Heart left ventricle (tissue), 16 donors: ENCODE measurements at regions of chr2 and their contacts with region 1.

Region 1: DNA sequence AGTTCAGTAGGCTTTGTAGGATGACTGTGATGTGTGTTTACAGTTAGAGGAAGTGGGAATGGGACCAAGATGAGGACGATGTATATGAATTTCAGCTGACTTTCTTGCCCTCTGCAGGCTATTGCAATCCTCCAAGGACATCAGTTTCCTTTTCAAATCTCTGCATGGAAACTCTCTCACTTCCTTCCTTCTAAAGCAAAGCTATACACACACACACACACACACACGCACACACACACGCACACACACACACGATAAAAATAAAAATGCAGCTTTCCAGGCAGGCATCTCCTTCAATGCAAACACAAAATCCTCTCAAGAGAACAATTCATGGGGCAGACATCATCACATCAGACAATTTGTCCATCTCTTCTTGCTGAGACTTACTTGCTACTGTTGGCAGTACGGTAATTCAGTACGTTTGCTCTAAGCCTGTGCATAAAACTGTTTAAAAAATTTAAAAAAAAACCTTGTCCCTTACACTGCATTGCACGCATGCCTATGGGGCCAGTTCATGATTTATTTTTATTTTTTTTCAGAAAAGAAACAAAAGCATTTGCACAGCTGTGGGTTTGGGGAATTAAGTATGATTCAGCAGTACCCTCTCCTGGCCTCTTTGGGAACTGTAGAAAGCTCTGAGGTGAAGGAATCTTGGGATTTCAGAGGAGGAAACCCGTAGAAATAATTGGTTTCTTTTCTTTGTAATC is 27.1 kb upstream of the ICOS start:
- DNase-seq: peak in 1 of 5 donors; percentile 25
- ATAC-seq: peak; percentile 79 to 89 (median 87)
- H3K4me3 ChIP-seq: peak overlapping the region in 8 of 12 donors; percentile 14 to 54 (median 35)
- H3K27ac ChIP-seq: peak overlapping the region; percentile 0 to 85 (median 28)
- H3K4me1 ChIP-seq: peaks cover 0 to 30% (median 8%) of the 10 kb centered on the region in 12 donors
- H3K27me3 ChIP-seq: no peaks in the 10 kb centered on the region
- CTCF ChIP-seq: peak; percentile 56 to 91 (median 75)
- POLR2A ChIP-seq: no peak

Region 2: DNA sequence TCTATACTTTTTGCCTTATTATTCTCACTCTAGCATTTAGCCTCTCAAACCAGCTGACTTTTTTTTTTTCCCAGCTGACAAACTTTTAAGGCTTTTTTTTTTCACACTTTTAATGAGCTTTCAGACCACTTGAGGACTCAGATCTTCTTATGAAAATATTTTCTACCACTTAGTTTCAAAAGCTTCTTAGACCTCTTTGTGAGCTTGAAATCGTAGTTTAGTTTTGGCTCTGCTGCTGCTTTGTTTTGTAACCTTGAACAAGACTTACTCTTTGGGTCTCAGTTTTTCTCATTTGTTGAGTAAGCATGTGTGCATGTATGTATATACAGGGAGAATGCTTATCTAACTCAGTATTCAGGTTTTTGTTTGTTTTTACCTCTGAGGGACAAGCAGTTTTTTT is 891.2 kb before region 1 on chr2:
- intact Hi-C with region 1: no loop called
- DNase-seq: no peak
- ATAC-seq: no peak
- H3K4me3 ChIP-seq: peak overlapping the region; percentile 10 to 94 (median 87)
- H3K27ac ChIP-seq: peak overlapping the region in 10 of 12 donors; percentile 4 to 99 (median 96)
- H3K4me1 ChIP-seq: peaks cover 0 to 71% (median 46%) of the 10 kb centered on the region in 12 donors
- H3K27me3 ChIP-seq: no peaks in the 10 kb centered on the region
- CTCF ChIP-seq: no peak
- POLR2A ChIP-seq: no peak

Region 3: DNA sequence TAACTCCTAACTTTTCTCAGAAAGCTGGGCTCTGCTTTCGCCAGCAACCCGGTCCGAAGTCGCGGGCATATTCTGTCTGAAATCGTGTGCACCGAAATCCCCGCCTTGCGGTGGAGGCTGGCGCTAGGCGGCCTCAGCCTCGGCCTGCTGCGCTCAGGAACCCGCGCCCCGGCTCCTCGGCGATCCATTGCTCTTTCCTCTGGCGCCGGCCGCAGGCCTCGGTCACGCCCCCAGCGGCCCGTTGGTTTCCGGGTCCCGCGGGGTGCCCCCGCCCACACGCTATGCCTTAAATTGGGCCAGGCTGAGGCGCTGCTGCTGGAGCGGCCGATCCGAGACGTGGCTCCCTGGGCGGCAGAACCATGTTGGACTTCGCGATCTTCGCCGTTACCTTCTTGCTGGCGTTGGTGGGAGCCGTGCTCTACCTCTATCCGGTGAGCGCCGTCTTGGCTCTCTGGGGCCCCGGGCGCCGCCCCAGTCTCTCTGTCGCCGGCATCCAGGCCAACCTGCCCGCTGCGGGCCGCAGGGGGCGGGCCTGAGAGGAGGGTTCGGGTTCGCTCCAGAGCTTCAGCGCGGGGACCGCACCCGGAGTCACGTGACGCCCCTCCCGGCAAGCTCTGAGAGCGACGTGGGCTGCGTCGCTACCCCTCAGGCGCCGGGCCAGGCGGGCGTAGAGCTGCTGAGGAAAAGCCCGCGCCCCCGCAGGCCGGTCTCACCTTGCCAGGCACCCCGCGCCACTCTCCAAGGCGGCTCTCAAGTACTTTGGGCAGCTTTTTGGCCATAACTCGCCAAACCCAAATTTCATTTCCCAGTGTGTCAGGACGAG is 670.5 kb before region 1 on chr2 and contains the start of gene CYP20A1:
- intact Hi-C with region 1: loop called in 2 of 10 experiments (anchors 5 to 10 kb)
- DNase-seq: peak; percentile 96 to 99 (median 98)
- ATAC-seq: peak; percentile 97 to 99 (median 98)
- H3K4me3 ChIP-seq: peak within 1 kb of the TSS; percentile 63 to 96 (median 82)
- H3K27ac ChIP-seq: peak within 1 kb of the TSS; percentile 84 to 99 (median 98)
- H3K4me1 ChIP-seq: peaks cover 0 to 26% (median 15%) of the 10 kb centered on the region in 12 donors
- H3K27me3 ChIP-seq: no peaks in the 10 kb centered on the region
- CTCF ChIP-seq: peak; percentile 11 to 53 (median 40)
- POLR2A ChIP-seq: peak; percentile 7 to 82
- total RNA-seq, gene CYP20A1: 7.9 to 18.8 (median 14.8) TPM

Region 4: GRCh38 chr2:203484266-203485112 is 424.9 kb before region 1 on chr2:
- intact Hi-C with region 1: loop called in 9 of 10 experiments (anchors 2 to 10 kb)
- DNase-seq: peak in 2 of 5 donors; percentile 29 to 32
- ATAC-seq: peak; percentile 63 to 91 (median 81)
- H3K4me3 ChIP-seq: no peak overlapping the region
- H3K27ac ChIP-seq: no peak overlapping the region
- H3K4me1 ChIP-seq: peaks cover 0 to 11% (median 0%) of the 10 kb centered on the region in 12 donors
- H3K27me3 ChIP-seq: no peaks in the 10 kb centered on the region
- CTCF ChIP-seq: peak; percentile 48 to 73 (median 63)
- POLR2A ChIP-seq: no peak

Region 5: GRCh38 chr2:203814661-203815540 is 94.5 kb before region 1 on chr2:
- intact Hi-C with region 1: loop called in 5 of 10 experiments (anchors 5 to 10 kb)
- DNase-seq: peak in 4 of 5 donors; percentile 41 to 59 (median 44)
- ATAC-seq: peak; percentile 79 to 89 (median 85)
- H3K4me3 ChIP-seq: peak overlapping the region in 4 of 12 donors; percentile 20 to 36 (median 22)
- H3K27ac ChIP-seq: peak overlapping the region in 6 of 12 donors; percentile 4 to 67 (median 22)
- H3K4me1 ChIP-seq: peaks cover 0 to 61% (median 11%) of the 10 kb centered on the region in 12 donors
- H3K27me3 ChIP-seq: no peaks in the 10 kb centered on the region
- CTCF ChIP-seq: peak; percentile 69 to 89 (median 80)
- POLR2A ChIP-seq: no peak

Region 6: GRCh38 chr2:203840655-203841205 is 68.7 kb before region 1 on chr2:
- intact Hi-C with region 1: no loop called
- DNase-seq: no peak
- ATAC-seq: no peak
- H3K4me3 ChIP-seq: no peak overlapping the region
- H3K27ac ChIP-seq: no peak overlapping the region
- H3K4me1 ChIP-seq: no peaks in the 10 kb centered on the region
- H3K27me3 ChIP-seq: no peaks in the 10 kb centered on the region
- CTCF ChIP-seq: no peak
- POLR2A ChIP-seq: no peak